K562 (cell line): ENCODE measurements at regions of chr5 and their contacts with region 1.

Region 1: GRCh38 chr5:17216176-17216973 is 1.1 kb upstream of the BASP1 start:
- DNase-seq: peak; percentile 21 to 62 (median 30)
- ATAC-seq: peak; percentile 73
- H3K4me3 ChIP-seq: no peak overlapping the region
- H3K27ac ChIP-seq: no peak overlapping the region
- H3K4me1 ChIP-seq: peaks cover 0 to 7% of the 10 kb centered on the region in 2 experiments; a peak in 1 of 5 replicates
- H3K27me3 ChIP-seq: no peaks in the 10 kb centered on the region
- CTCF ChIP-seq: peak; percentile 55 to 79 (median 74)
- EP300 ChIP-seq: no peak
- POLR2A ChIP-seq: no peak
- RAD21 ChIP-seq: peak; percentile 80 to 87

Region 2: DNA sequence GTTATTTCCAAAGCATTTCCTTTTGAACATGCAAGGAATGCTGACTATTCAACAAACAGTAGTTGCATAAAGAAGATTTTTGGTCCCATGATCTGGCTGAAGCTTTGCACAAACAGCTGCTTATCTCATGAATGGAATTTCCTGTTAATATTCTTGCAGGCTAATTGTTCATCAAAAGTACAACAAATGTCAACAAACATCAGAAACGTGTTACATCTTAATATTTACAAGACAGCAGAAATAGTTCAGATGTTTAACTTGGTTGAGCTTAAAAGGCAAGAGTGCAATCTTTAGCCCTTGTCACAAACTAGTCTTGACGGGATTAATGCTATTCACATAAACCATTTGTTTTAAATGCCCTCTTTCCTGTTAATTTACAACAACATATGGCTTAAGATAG is 46.9 kb before region 1 on chr5:
- CTCF ChIA-PET with region 1: no interaction called
- POLR2A ChIA-PET with region 1: no interaction called
- in situ Hi-C with region 1: no loop called
- intact Hi-C with region 1: no loop called
- DNase-seq: no peak
- ATAC-seq: no peak
- H3K4me3 ChIP-seq: no peak overlapping the region
- H3K27ac ChIP-seq: no peak overlapping the region
- H3K4me1 ChIP-seq: no peaks in the 10 kb centered on the region
- H3K27me3 ChIP-seq: 0 out of 5 replicates have a peak, but pooled peaks cover 0 to 2% of the 10 kb centered on the region in 2 experiments
- CTCF ChIP-seq: no peak
- EP300 ChIP-seq: no peak
- POLR2A ChIP-seq: no peak
- RAD21 ChIP-seq: no peak

Region 3: GRCh38 chr5:18305297-18305924 is 1089.0 kb after region 1 on chr5:
- CTCF ChIA-PET with region 1: no interaction called
- POLR2A ChIA-PET with region 1: no interaction called
- in situ Hi-C with region 1: loop called (anchors 5 kb)
- intact Hi-C with region 1: no loop called
- DNase-seq: peak; percentile 11 to 15 (median 13)
- ATAC-seq: no peak
- H3K4me3 ChIP-seq: no peak overlapping the region
- H3K27ac ChIP-seq: no peak overlapping the region
- H3K4me1 ChIP-seq: no peaks in the 10 kb centered on the region
- H3K27me3 ChIP-seq: no peaks in the 10 kb centered on the region
- CTCF ChIP-seq: peak; percentile 32 to 53 (median 50); a peak in 4 of 6 replicates
- EP300 ChIP-seq: no peak
- POLR2A ChIP-seq: no peak
- RAD21 ChIP-seq: peak; percentile 65 to 78

Region 4: DNA sequence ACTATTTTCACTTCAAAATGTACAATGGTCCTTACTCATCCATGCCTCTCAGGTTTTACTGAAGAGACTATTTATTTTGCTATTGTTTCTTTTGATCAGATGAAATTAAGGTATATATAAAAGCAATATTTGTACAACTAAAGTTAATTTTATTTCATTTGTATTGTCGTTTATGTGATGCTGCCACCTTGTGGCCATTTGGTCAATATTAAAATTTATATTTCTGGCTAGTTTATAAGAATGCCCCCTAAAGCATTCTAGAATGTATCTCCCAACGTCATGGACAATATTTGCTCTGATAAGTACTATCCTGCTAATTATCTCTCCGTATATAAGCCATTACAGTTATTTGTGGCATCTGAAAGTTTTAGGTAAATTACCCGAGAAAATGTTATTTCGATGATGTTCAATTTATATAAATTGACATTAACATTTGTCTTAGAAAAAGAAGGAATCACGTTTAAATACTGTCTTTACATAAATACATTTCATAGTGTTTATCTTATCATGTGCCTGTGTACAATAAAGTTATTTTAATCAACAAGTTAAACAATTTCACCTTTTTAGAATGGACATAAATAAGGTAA is 1097.9 kb after region 1 on chr5:
- CTCF ChIA-PET with region 1: interaction called, 12 read pairs
- POLR2A ChIA-PET with region 1: no interaction called
- in situ Hi-C with region 1: loop called (anchors 5 kb)
- intact Hi-C with region 1: loop called (anchors 1 kb)
- DNase-seq: peak; percentile 15 to 48 (median 24)
- ATAC-seq: no peak
- H3K4me3 ChIP-seq: no peak overlapping the region
- H3K27ac ChIP-seq: no peak overlapping the region
- H3K4me1 ChIP-seq: no peaks in the 10 kb centered on the region
- H3K27me3 ChIP-seq: no peaks in the 10 kb centered on the region
- CTCF ChIP-seq: peak in 2 of 3 experiments; percentile 19 to 59; a peak in 3 of 6 replicates
- EP300 ChIP-seq: no peak
- POLR2A ChIP-seq: no peak
- RAD21 ChIP-seq: peak; percentile 50 to 67